Prostate gland (tissue), 2 donors: ENCODE measurements at regions of chr2 and their contacts with region 1.

Region 1: GRCh38 chr2:152036611-152037469 is 62.0 kb downstream of the CACNB4 start:
- DNase-seq: peak; percentile 76
- H3K4me3 ChIP-seq: no peak overlapping the region
- H3K27ac ChIP-seq: no peak overlapping the region
- H3K4me1 ChIP-seq: no peaks in the 10 kb centered on the region
- H3K27me3 ChIP-seq: no peaks in the 10 kb centered on the region
- CTCF ChIP-seq: peak; percentile 57 to 82 (median 76)
- POLR2A ChIP-seq: no peak

Region 2: GRCh38 chr2:151851761-151852160 is 185.1 kb before region 1 on chr2:
- intact Hi-C with region 1: no loop called
- DNase-seq: no peak
- H3K4me3 ChIP-seq: no peak overlapping the region
- H3K27ac ChIP-seq: no peak overlapping the region
- H3K4me1 ChIP-seq: no peaks in the 10 kb centered on the region
- H3K27me3 ChIP-seq: no peaks in the 10 kb centered on the region
- CTCF ChIP-seq: no peak
- POLR2A ChIP-seq: no peak

Region 3: GRCh38 chr2:152175458-152176325 is 138.9 kb after region 1 on chr2 and contains the start of gene STAM2:
- intact Hi-C with region 1: loop called (anchors 5 kb)
- DNase-seq: peak; percentile 92
- H3K4me3 ChIP-seq: peak within 1 kb of the TSS; percentile 67 to 75
- H3K27ac ChIP-seq: peak within 1 kb of the TSS; percentile 97
- H3K4me1 ChIP-seq: no peaks in the 10 kb centered on the region
- H3K27me3 ChIP-seq: no peaks in the 10 kb centered on the region
- CTCF ChIP-seq: peak; percentile 93 to 98 (median 96)
- POLR2A ChIP-seq: peak; percentile 82
- total RNA-seq, gene STAM2: 28.7 to 39.3 TPM

Region 4: DNA sequence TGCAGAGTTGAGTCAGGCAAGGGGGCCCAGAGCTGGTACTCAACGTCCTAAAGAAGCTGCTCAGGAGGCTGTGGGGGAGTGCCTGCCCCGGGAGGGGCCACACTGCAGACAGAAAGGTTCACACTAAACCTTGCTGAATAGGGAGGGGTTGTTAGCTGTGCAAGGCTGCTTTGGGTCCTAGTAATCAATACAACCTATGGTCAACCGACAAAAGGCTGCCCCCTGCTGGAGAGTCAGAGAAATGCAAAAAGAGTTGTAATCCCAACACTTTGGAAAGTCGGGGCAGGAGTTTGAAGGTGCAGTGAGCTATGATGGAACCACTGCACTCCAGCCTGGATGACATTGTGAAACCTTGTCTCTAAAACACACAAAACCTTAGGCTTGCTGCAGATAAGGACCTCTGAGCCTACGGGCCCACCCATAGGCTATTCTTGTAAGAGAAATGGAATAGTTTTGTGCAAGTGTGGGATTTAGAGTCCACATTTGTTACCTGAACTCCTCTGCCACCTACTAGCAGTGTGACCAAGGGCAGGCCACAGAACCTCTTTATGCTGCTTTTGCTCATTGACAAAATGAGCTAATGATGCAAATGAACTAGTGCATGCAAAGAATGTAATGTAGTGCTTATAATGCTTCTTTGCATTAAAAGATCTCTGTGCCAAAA is 598.9 kb after region 1 on chr2:
- intact Hi-C with region 1: loop called (anchors 10 kb)
- DNase-seq: peak; percentile 16
- H3K4me3 ChIP-seq: no peak overlapping the region
- H3K27ac ChIP-seq: no peak overlapping the region
- H3K4me1 ChIP-seq: no peaks in the 10 kb centered on the region
- H3K27me3 ChIP-seq: no peaks in the 10 kb centered on the region
- CTCF ChIP-seq: peak; percentile 63 to 85 (median 80)
- POLR2A ChIP-seq: no peak